Activated CD8-positive, alpha-beta T cell treated with anti-CD3 and anti-CD28 coated beads for 36 hours (primary cell): ENCODE measurements at regions of chr4 and their contacts with region 1.

Region 1: GRCh38 chr4:142126890-142127497 is 490.6 kb downstream of the IL15 start:
- DNase-seq: peak; percentile 73
- ATAC-seq: peak; percentile 76
- H3K4me3 Mint-ChIP-seq: no peak overlapping the region
- H3K27ac Mint-ChIP-seq: no peak overlapping the region
- H3K4me1 Mint-ChIP-seq: peaks cover 25% of the 10 kb centered on the region
- H3K27me3 Mint-ChIP-seq: no peaks in the 10 kb centered on the region
- CTCF ChIP-seq: peak; percentile 97

Region 2: GRCh38 chr4:142435599-142436235 is 308.7 kb after region 1 on chr4:
- CTCF ChIA-PET with region 1: no interaction called
- POLR2A ChIA-PET with region 1: no interaction called
- intact Hi-C with region 1: loop called (anchors 10 kb)
- DNase-seq: no peak
- ATAC-seq: no peak
- H3K4me3 Mint-ChIP-seq: no peak overlapping the region
- H3K27ac Mint-ChIP-seq: no peak overlapping the region
- H3K4me1 Mint-ChIP-seq: peaks cover 33% of the 10 kb centered on the region
- H3K27me3 Mint-ChIP-seq: no peaks in the 10 kb centered on the region
- CTCF ChIP-seq: no peak

Region 3: DNA sequence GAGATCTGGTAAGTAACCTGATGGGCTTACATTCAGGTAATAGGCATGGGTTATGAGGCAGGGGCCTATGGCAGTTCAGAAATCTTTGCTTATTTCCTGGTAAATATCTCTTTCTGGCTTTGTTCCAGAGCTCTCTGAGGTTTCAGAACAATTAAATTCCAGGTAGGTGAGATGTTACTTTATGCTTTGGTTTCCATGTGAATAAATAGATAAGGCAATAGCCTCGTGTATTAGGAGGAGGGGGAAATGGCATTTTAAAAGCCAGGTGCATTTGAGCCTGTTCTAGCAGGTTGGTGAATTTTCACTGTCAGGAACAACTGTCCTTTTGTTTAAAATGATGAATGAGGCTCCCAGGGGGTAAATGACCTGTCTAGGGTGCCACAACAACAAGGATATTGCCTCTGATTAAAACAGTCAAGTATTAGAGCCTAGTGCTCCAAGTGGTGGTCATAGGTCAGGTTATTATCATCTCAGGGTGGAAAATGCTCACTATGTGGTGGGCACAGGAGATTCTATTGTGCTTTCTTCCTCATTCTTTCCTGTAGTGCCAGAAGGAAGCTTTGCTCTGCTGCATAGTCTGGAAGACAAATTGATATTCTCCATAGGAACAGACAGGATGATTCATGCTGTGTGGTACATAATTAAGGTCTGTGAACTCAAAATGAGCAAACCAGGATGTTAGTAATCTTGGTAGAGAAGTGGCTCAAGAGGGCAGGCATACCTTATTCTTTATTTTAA is 422.9 kb after region 1 on chr4:
- CTCF ChIA-PET with region 1: no interaction called
- POLR2A ChIA-PET with region 1: no interaction called
- intact Hi-C with region 1: loop called (anchors 10 kb)
- DNase-seq: no peak
- ATAC-seq: peak; percentile 87
- H3K4me3 Mint-ChIP-seq: no peak overlapping the region
- H3K27ac Mint-ChIP-seq: no peak overlapping the region
- H3K4me1 Mint-ChIP-seq: peaks cover 23% of the 10 kb centered on the region
- H3K27me3 Mint-ChIP-seq: no peaks in the 10 kb centered on the region
- CTCF ChIP-seq: no peak

Region 4: GRCh38 chr4:142696334-142697122 is 569.5 kb after region 1 on chr4:
- CTCF ChIA-PET with region 1: no interaction called
- POLR2A ChIA-PET with region 1: no interaction called
- intact Hi-C with region 1: loop called (anchors 10 kb)
- DNase-seq: peak; percentile 34
- ATAC-seq: peak; percentile 52
- H3K4me3 Mint-ChIP-seq: peak overlapping the region; percentile 2
- H3K27ac Mint-ChIP-seq: peak overlapping the region; percentile 89
- H3K4me1 Mint-ChIP-seq: peaks cover 53% of the 10 kb centered on the region
- H3K27me3 Mint-ChIP-seq: no peaks in the 10 kb centered on the region
- CTCF ChIP-seq: no peak

Region 5: GRCh38 chr4:142728233-142728632 is 601.2 kb after region 1 on chr4:
- CTCF ChIA-PET with region 1: no interaction called
- POLR2A ChIA-PET with region 1: no interaction called
- intact Hi-C with region 1: loop called (anchors 5 kb)
- DNase-seq: no peak
- ATAC-seq: no peak
- H3K4me3 Mint-ChIP-seq: no peak overlapping the region
- H3K27ac Mint-ChIP-seq: no peak overlapping the region
- H3K4me1 Mint-ChIP-seq: peaks cover 2% of the 10 kb centered on the region
- H3K27me3 Mint-ChIP-seq: no peaks in the 10 kb centered on the region
- CTCF ChIP-seq: no peak

Region 6: GRCh38 chr4:142846729-142847596 is 720.0 kb after region 1 on chr4:
- CTCF ChIA-PET with region 1: interaction called, 3 read pairs
- POLR2A ChIA-PET with region 1: no interaction called
- intact Hi-C with region 1: loop called (anchors 2 kb)
- DNase-seq: peak; percentile 83
- ATAC-seq: peak; percentile 84
- H3K4me3 Mint-ChIP-seq: peak overlapping the region; percentile 83
- H3K27ac Mint-ChIP-seq: no peak overlapping the region
- H3K4me1 Mint-ChIP-seq: peaks cover 5% of the 10 kb centered on the region
- H3K27me3 Mint-ChIP-seq: peaks cover 26% of the 10 kb centered on the region
- CTCF ChIP-seq: peak; percentile 62